Activated B cell treated with CpG ODN at 0.5 μM for 24 hours (primary cell): ENCODE measurements at regions of chr1 and their contacts with region 1.

Region 1: GRCh38 chr1:203006948-203007871 is at the start of gene TMEM183A:
- DNase-seq: peak; percentile 82
- ATAC-seq: peak; percentile 86
- H3K4me3 Mint-ChIP-seq: peak within 1 kb of the TSS; percentile 96
- H3K27ac Mint-ChIP-seq: peak within 1 kb of the TSS; percentile 97
- H3K4me1 Mint-ChIP-seq: peaks cover 35% of the 10 kb centered on the region
- H3K27me3 Mint-ChIP-seq: no peaks in the 10 kb centered on the region
- CTCF ChIP-seq: no peak
- total RNA-seq, gene TMEM183A: 62.5 and 70.6 TPM in 2 replicates

Region 2: GRCh38 chr1:202348509-202349205 is 658.6 kb before region 1 on chr1 and contains the start of gene PPP1R12B:
- CTCF ChIA-PET with region 1: no interaction called
- POLR2A ChIA-PET with region 1: interaction called, 4 read pairs
- intact Hi-C with region 1: loop called (anchors 2 kb)
- DNase-seq: peak; percentile 90
- ATAC-seq: peak; percentile 95
- H3K4me3 Mint-ChIP-seq: peak within 1 kb of the TSS; percentile 99
- H3K27ac Mint-ChIP-seq: peak within 1 kb of the TSS; percentile 93
- H3K4me1 Mint-ChIP-seq: peaks cover 25% of the 10 kb centered on the region
- H3K27me3 Mint-ChIP-seq: no peaks in the 10 kb centered on the region
- CTCF ChIP-seq: no peak
- total RNA-seq, gene PPP1R12B: 22.4 and 25.7 TPM in 2 replicates

Region 3: DNA sequence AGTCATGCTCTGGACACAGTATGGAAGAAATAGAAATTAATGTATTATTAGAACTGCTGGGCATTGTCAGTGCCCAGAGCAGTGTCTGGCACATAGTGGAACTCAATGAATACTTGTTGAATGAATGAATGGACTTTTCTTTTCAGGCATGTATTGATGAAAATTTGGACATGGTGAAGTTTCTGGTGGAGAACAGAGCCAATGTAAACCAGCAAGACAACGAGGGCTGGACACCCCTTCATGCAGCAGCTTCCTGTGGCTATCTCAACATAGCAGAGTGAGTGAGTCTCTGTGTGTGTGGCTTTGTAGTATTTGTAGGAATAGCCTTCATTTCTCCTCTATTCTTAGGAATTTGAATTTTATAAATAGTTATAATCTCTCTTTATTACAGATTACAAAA is 590.6 kb before region 1 on chr1:
- CTCF ChIA-PET with region 1: no interaction called
- POLR2A ChIA-PET with region 1: no interaction called
- intact Hi-C with region 1: no loop called
- DNase-seq: no peak
- ATAC-seq: no peak
- H3K4me3 Mint-ChIP-seq: no peak overlapping the region
- H3K27ac Mint-ChIP-seq: no peak overlapping the region
- H3K4me1 Mint-ChIP-seq: no peaks in the 10 kb centered on the region
- H3K27me3 Mint-ChIP-seq: no peaks in the 10 kb centered on the region
- CTCF ChIP-seq: no peak

Region 4: GRCh38 chr1:202888531-202889360 is 118.5 kb before region 1 on chr1 and contains the start of gene RABIF:
- CTCF ChIA-PET with region 1: no interaction called
- POLR2A ChIA-PET with region 1: interaction called, 14 read pairs
- intact Hi-C with region 1: loop called (anchors 1 kb)
- DNase-seq: peak; percentile 94
- ATAC-seq: peak; percentile 92
- H3K4me3 Mint-ChIP-seq: peak within 1 kb of the TSS; percentile 96
- H3K27ac Mint-ChIP-seq: peak within 1 kb of the TSS; percentile 98
- H3K4me1 Mint-ChIP-seq: peaks cover 16% of the 10 kb centered on the region
- H3K27me3 Mint-ChIP-seq: no peaks in the 10 kb centered on the region
- CTCF ChIP-seq: no peak
- total RNA-seq, gene RABIF: 10.7 and 13.2 TPM in 2 replicates

Region 5: GRCh38 chr1:202957733-202958543 is 49.3 kb before region 1 on chr1 and contains the start of gene ADIPOR1:
- CTCF ChIA-PET with region 1: interaction called, 3 read pairs
- POLR2A ChIA-PET with region 1: interaction called, 7 read pairs
- intact Hi-C with region 1: loop called (anchors 2 kb)
- DNase-seq: peak; percentile 92
- ATAC-seq: peak; percentile 99
- H3K4me3 Mint-ChIP-seq: peak within 1 kb of the TSS; percentile 90
- H3K27ac Mint-ChIP-seq: peak within 1 kb of the TSS; percentile 86
- H3K4me1 Mint-ChIP-seq: peaks cover 34% of the 10 kb centered on the region
- H3K27me3 Mint-ChIP-seq: no peaks in the 10 kb centered on the region
- CTCF ChIP-seq: no peak
- total RNA-seq, gene ADIPOR1: 44.4 and 45.0 TPM in 2 replicates

Region 6: DNA sequence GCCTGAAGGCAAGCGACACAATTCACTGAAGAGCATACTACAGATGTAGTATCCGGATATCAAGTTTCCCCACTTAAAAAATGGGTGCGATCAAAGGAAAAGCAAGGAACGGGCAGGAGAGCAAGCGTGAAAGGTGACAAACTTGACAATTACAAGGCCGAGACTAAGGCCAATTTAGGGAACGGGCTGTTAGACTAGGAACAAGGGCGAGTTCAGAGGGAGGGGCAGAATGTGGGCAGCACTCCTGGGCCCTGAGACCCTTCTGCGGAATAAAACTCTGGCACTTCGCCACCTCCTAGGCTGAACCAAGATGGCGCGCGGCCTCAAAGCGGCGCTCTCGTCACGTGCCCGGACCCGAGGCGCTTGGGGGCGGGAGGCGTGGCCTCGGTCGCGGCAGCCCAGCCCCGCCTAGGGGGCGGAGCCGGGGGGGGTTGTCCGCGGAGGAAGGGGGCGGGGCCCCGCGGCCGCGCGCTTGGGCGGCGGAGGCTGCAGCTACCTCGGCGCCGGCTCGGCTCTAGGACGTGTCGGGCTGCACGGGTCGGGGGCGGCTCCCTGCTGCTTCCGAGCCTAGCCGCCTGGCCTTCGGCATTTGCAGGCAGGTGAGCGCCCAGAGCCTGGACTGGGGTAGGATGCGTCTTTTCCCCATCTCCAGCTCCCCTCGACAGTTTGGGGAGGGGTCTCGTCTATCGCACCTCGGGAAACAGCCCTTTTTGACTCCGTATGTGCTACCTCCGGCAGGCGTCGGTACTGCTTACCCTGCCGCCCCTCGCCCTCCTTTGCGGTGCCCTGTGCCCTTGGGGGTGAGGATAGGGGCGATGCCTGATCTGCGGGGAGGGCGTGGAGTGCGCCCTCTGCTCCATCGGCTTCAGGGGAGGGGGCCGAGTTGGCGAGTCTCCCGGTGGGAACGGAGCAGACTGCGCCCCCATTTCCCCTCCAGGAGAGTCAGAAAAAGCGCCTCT is 19.1 kb after region 1 on chr1 and contains the start of gene PPFIA4:
- CTCF ChIA-PET with region 1: no interaction called
- POLR2A ChIA-PET with region 1: interaction called, 15 read pairs
- intact Hi-C with region 1: loop called (anchors 1 kb)
- DNase-seq: peak; percentile 87
- ATAC-seq: peak; percentile 97
- H3K4me3 Mint-ChIP-seq: peak within 1 kb of the TSS; percentile 73
- H3K27ac Mint-ChIP-seq: peak within 1 kb of the TSS; percentile 72
- H3K4me1 Mint-ChIP-seq: peaks cover 16% of the 10 kb centered on the region
- H3K27me3 Mint-ChIP-seq: peaks cover 3% of the 10 kb centered on the region
- CTCF ChIP-seq: no peak
- total RNA-seq, gene PPFIA4: 0.12 and 0.29 TPM in 2 replicates

Region 7: DNA sequence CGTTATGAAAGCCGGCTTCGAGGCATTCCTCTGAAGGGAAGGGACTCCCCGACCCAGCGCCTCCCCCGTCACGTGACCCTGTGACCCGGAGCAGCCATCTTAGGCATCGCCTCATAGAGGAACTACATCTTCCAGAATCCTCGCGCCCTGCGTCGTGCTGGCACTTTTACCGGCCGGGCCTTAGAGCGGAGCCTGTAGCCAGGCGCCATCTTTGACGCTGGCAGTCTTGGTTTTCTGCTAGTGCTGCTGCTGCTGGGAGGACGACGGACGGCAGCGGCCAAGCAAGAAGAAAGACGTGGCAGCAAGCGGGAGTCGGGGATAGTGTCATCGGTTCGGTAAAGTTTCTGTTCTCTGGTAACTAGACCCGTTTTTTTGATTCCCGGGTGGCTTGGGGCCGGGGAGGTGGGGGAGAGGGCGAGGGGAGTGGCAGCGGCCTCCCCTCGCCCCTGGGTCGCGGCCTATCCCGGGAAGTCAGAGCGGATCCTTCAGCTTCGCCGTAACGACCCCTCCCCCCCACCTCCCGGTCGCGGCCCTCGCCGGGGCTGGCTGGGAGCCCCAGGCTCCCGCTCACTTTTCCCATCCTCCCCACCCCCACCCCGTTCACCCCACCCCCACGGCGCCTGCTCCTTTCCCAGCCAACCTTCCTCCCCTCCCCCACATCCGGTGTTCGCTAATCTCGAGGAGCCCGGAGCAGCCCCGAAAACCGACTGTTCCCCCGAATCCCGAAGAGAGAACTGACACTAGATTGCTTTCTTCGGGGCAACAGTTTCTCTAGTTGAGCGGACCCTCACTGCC is 788.4 kb after region 1 on chr1 and contains the starts of genes ZBED6 and ZC3H11A:
- CTCF ChIA-PET with region 1: no interaction called
- POLR2A ChIA-PET with region 1: no interaction called
- intact Hi-C with region 1: loop called (anchors 5 kb)
- DNase-seq: peak; percentile 90
- ATAC-seq: peak; percentile 97
- H3K4me3 Mint-ChIP-seq: peak within 1 kb of the TSS; percentile 99
- H3K27ac Mint-ChIP-seq: peak within 1 kb of the TSS; percentile 95
- H3K4me1 Mint-ChIP-seq: peaks cover 51% of the 10 kb centered on the region
- H3K27me3 Mint-ChIP-seq: no peaks in the 10 kb centered on the region
- CTCF ChIP-seq: no peak
- total RNA-seq, gene ZBED6: 26.3 and 31.4 TPM in 2 replicates
- total RNA-seq, gene ZC3H11A: 85.6 and 91.6 TPM in 2 replicates